ENCODE measurements at regions of chr17 and their contacts with region 1.

Region 1: GRCh38 chr17:48074315-48075081 is 26.3 kb downstream of the NFE2L1 start:
- DNase-seq: peak; percentile 83
- H3K4me3 Mint-ChIP-seq: no peak overlapping the region
- H3K27ac Mint-ChIP-seq: peak overlapping the region; percentile 42
- H3K4me1 Mint-ChIP-seq: peaks cover 9% of the 10 kb centered on the region
- H3K27me3 Mint-ChIP-seq: no peaks in the 10 kb centered on the region
- CTCF ChIP-seq: peak; percentile 54

Region 2: GRCh38 chr17:47862621-47863440 is 211.7 kb before region 1 on chr17:
- CTCF ChIA-PET with region 1: no interaction called
- POLR2A ChIA-PET with region 1: no interaction called
- intact Hi-C with region 1: no loop called
- DNase-seq: peak; percentile 53
- H3K4me3 Mint-ChIP-seq: no peak overlapping the region
- H3K27ac Mint-ChIP-seq: peak overlapping the region; percentile 4
- H3K4me1 Mint-ChIP-seq: peaks cover 21% of the 10 kb centered on the region
- H3K27me3 Mint-ChIP-seq: no peaks in the 10 kb centered on the region
- CTCF ChIP-seq: no peak

Region 3: DNA sequence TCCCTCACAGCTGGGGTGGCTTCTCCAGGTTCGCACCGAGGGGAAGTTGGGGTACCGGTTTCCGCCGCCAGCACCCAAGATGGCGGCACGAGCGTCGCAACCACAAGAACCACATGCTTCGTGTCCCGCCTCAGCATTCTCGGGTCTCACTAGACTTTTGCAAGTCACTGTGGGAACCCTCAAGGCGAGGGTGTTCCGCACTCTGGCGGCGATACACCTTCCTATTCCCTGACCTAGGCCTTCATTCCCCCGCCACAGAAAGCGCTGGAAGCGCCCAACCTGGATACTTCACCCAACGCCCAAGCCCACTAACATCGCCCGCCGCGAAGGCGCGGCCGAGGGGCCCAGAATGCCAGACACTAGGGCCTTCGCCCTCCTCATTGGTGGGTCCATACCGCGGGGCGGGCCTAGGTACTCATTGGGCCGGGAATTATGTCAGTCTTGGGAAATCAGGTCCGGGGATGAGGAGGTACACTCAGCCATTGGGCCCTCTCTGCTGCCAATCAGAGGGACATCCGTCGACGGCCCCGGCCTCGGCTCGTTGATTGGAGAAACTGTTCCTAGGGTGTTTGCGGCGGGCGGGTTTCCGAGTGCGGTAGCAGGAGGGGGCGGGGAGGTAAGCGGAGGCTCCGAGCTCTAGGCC is 26.6 kb before region 1 on chr17 and contains the start of gene NFE2L1:
- CTCF ChIA-PET with region 1: interaction called, 26 read pairs
- POLR2A ChIA-PET with region 1: interaction called, 353 read pairs
- intact Hi-C with region 1: loop called (anchors 1 kb)
- DNase-seq: peak; percentile 100
- H3K4me3 Mint-ChIP-seq: peak within 1 kb of the TSS; percentile 91
- H3K27ac Mint-ChIP-seq: peak within 1 kb of the TSS; percentile 100
- H3K4me1 Mint-ChIP-seq: peaks cover 47% of the 10 kb centered on the region
- H3K27me3 Mint-ChIP-seq: no peaks in the 10 kb centered on the region
- CTCF ChIP-seq: no peak
- total RNA-seq, gene NFE2L1: 235 and 315 TPM in 2 replicates

Region 4: DNA sequence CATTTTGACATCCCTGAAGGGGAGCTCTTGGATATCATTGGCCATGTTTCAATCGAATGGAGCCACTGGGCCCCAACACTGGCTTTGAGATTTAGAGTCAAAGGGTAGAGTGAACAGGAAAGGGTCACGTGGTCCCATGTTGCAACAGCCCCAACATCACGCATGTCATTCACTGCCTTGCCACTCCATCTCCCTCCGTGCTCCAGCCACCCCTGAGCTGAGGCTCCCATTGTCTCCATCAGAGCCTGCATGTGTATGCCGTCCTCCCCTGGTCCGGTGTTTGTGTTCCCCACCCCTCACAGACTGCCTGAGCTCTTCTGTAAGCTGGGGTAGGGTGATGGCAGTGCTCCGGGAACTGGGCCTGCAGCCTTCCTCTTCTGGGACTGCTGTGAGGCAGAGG is 14.2 kb before region 1 on chr17:
- CTCF ChIA-PET with region 1: interaction called, 13 read pairs
- POLR2A ChIA-PET with region 1: interaction called, 353 read pairs
- intact Hi-C with region 1: no loop called
- DNase-seq: no peak
- H3K4me3 Mint-ChIP-seq: no peak overlapping the region
- H3K27ac Mint-ChIP-seq: peak overlapping the region; percentile 64
- H3K4me1 Mint-ChIP-seq: peaks cover 40% of the 10 kb centered on the region
- H3K27me3 Mint-ChIP-seq: no peaks in the 10 kb centered on the region
- CTCF ChIP-seq: no peak

Region 5: GRCh38 chr17:48093341-48094045 is 19.0 kb after region 1 on chr17:
- CTCF ChIA-PET with region 1: interaction called, 60 read pairs
- POLR2A ChIA-PET with region 1: interaction called, 4 read pairs
- intact Hi-C with region 1: no loop called
- DNase-seq: no peak
- H3K4me3 Mint-ChIP-seq: no peak overlapping the region
- H3K27ac Mint-ChIP-seq: peak overlapping the region; percentile 61
- H3K4me1 Mint-ChIP-seq: peaks cover 4% of the 10 kb centered on the region
- H3K27me3 Mint-ChIP-seq: no peaks in the 10 kb centered on the region
- CTCF ChIP-seq: no peak

Region 6: GRCh38 chr17:48123111-48123510 is 48.6 kb after region 1 on chr17:
- CTCF ChIA-PET with region 1: interaction called, 72 read pairs
- POLR2A ChIA-PET with region 1: interaction called, 3 read pairs
- intact Hi-C with region 1: no loop called
- DNase-seq: no peak
- H3K4me3 Mint-ChIP-seq: no peak overlapping the region
- H3K27ac Mint-ChIP-seq: no peak overlapping the region
- H3K4me1 Mint-ChIP-seq: peaks cover 13% of the 10 kb centered on the region
- H3K27me3 Mint-ChIP-seq: no peaks in the 10 kb centered on the region
- CTCF ChIP-seq: no peak